PC-9 (cell line): ENCODE measurements at regions of chr1 and their contacts with region 1.

Region 1: DNA sequence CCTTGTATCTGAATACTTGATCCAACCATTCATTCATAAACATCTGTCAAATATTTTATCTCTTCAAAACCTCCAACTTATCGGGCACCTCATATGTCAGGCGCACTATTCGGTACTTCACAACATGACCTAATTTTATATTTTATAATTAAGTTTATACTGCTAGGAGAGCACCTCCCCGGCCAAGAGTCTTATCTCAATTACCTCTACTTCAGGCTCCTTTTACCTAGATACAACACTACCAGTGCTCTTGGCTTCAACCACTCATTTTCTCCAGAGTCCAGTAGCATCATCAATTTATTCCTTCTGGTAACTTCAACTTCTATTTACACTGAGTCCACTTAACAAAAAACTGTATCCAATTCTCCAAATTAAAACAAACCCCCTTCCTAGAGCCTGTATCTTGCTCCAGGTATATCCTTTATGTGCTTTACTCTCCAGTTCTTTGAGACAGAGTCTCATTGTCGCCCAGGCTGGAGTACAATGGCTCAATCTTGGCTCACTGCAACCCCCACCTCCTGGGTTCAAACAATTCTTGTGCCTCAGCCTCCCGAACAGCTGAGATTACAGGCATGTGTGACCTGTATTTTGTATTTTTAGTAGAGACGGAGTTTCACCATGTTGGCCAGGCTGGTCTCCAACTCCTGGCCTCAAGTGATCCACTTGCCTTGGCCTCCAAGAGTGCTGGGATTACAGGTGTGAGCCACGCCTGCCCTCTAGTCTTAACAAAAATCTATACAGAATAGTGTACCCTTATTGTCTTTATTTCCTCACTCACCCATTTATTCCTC is 18.8 kb downstream of the GPBP1L1 start:
- DNase-seq: no peak
- H3K4me3 ChIP-seq: no peak overlapping the region
- H3K27ac ChIP-seq: no peak overlapping the region
- H3K4me1 ChIP-seq: no peaks in the 10 kb centered on the region
- H3K27me3 ChIP-seq: no peaks in the 10 kb centered on the region
- CTCF ChIP-seq: no peak

Region 2: GRCh38 chr1:44239331-44239960 is 1428.1 kb before region 1 on chr1:
- CTCF ChIA-PET with region 1: no interaction called
- POLR2A ChIA-PET with region 1: interaction called, 10 read pairs
- intact Hi-C with region 1: no loop called
- DNase-seq: no peak
- H3K4me3 ChIP-seq: no peak overlapping the region
- H3K27ac ChIP-seq: no peak overlapping the region
- H3K4me1 ChIP-seq: no peaks in the 10 kb centered on the region
- H3K27me3 ChIP-seq: no peaks in the 10 kb centered on the region
- CTCF ChIP-seq: no peak

Region 3: DNA sequence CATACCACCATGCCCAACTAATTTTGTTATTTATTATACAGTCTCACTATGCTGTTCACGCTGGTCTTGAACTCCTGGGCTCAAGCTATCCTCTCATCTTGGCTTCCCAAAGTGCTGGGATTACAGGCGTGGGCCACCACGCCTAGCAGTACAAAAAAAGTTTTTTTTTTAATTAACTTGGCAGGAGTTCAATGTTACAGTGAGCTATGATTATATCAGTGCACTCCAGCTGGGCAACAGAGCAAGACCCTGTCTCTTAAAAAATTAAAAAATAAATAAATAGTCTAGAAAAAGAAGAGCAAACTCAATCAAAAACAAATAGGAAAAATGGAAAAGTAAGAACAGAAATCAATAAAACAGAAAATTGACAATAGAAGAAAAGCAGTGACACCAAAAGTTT is 46.2 kb after region 1 on chr1:
- CTCF ChIA-PET with region 1: no interaction called
- POLR2A ChIA-PET with region 1: no interaction called
- intact Hi-C with region 1: no loop called
- DNase-seq: no peak
- H3K4me3 ChIP-seq: no peak overlapping the region
- H3K27ac ChIP-seq: no peak overlapping the region
- H3K4me1 ChIP-seq: no peaks in the 10 kb centered on the region
- H3K27me3 ChIP-seq: no peaks in the 10 kb centered on the region
- CTCF ChIP-seq: no peak